Activated naive CD8-positive, alpha-beta T cell treated with anti-CD3 and anti-CD28 coated beads, Interleukin-2, amount 10 ng/mL, durations not matched to agents 7 days and 5 days (primary cell): ENCODE measurements at regions of chrX and their contacts with region 1.

Region 1: GRCh38 chrX:44872817-44873414 is at the start of gene KDM6A:
- DNase-seq: peak; percentile 91
- ATAC-seq: peak; percentile 90
- H3K4me3 Mint-ChIP-seq: peak within 1 kb of the TSS; percentile 96
- H3K27ac Mint-ChIP-seq: peak within 1 kb of the TSS; percentile 98
- H3K4me1 Mint-ChIP-seq: peaks cover 7% of the 10 kb centered on the region
- H3K27me3 Mint-ChIP-seq: no peaks in the 10 kb centered on the region
- total RNA-seq, gene KDM6A: 31.3 to 37.5 TPM

Region 2: GRCh38 chrX:44961817-44962607 is 89.1 kb after region 1 on chrX:
- POLR2A ChIA-PET with region 1: no interaction called
- DNase-seq: no peak
- ATAC-seq: no peak
- H3K4me3 Mint-ChIP-seq: no peak overlapping the region
- H3K27ac Mint-ChIP-seq: no peak overlapping the region
- H3K4me1 Mint-ChIP-seq: peaks cover 4% of the 10 kb centered on the region
- H3K27me3 Mint-ChIP-seq: no peaks in the 10 kb centered on the region

Region 3: GRCh38 chrX:45070116-45071007 is 197.4 kb after region 1 on chrX:
- POLR2A ChIA-PET with region 1: interaction called, 23 read pairs
- DNase-seq: no peak
- ATAC-seq: peak; percentile 47
- H3K4me3 Mint-ChIP-seq: peak overlapping the region; percentile 41
- H3K27ac Mint-ChIP-seq: peak overlapping the region; percentile 70
- H3K4me1 Mint-ChIP-seq: peaks cover 36% of the 10 kb centered on the region
- H3K27me3 Mint-ChIP-seq: no peaks in the 10 kb centered on the region